Breast epithelium (tissue), 4 donors: ENCODE measurements at regions of chr2 and their contacts with region 1.

Region 1: DNA sequence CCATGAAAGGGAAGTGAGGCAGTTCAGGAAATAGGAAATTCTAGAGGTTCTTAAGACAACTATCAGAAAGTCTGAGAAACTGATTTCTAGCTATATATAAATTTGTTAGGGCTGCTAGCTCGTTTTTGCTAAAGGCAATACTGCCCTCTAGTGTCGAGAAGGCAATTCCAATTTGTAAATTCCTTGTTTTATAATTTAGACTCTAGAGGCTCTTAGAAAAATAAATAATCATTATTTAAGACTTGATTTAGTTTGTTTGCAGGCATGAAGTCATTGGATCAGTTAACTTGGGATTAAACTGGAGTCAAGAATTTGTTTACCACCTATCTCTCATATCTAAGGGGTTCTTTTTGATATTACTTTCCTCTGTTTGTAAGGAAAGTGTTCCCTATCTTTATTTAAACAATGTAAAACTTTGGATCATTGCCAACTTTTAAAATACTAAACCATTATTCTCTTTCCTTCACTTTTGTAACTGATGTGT is 66.2 kb downstream of the ACVR2A start:
- DNase-seq: no peak
- H3K4me3 ChIP-seq: no peak overlapping the region
- H3K27ac ChIP-seq: peak overlapping the region in 1 of 2 donors; percentile 16
- H3K4me1 ChIP-seq: no peaks in the 10 kb centered on the region
- H3K27me3 ChIP-seq: no peaks in the 10 kb centered on the region
- CTCF ChIP-seq: peak; percentile 62 to 78 (median 66)
- POLR2A ChIP-seq: no peak

Region 2: GRCh38 chr2:146927080-146927711 is 983.8 kb before region 1 on chr2:
- intact Hi-C with region 1: loop called (anchors 2 kb)
- DNase-seq: peak in 1 of 2 donors; percentile 48
- H3K4me3 ChIP-seq: no peak overlapping the region
- H3K27ac ChIP-seq: no peak overlapping the region
- H3K4me1 ChIP-seq: no peaks in the 10 kb centered on the region
- H3K27me3 ChIP-seq: no peaks in the 10 kb centered on the region
- CTCF ChIP-seq: peak in 2 of 3 donors; percentile 39 to 46
- POLR2A ChIP-seq: no peak

Region 3: DNA sequence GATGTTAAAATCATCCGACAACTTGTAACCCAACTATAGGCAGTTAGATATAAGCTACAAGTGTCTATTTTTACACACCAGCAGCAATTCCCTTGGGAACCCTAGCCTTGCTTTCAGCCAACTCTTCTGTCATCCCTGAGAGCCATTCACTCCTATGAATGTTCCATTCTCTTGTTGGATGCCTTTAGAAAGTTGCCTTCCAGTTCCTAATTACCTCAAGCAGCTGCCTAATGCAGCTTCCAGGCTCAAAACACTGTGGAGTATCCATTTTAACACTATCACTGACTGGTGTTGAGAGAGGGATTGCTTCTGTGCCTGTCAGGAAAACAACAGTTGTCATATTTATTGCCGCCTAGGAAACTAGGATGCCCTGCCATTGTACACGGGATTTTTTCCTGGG is 468.2 kb before region 1 on chr2:
- intact Hi-C with region 1: no loop called
- DNase-seq: no peak
- H3K4me3 ChIP-seq: no peak overlapping the region
- H3K27ac ChIP-seq: no peak overlapping the region
- H3K4me1 ChIP-seq: no peaks in the 10 kb centered on the region
- H3K27me3 ChIP-seq: no peaks in the 10 kb centered on the region
- CTCF ChIP-seq: no peak
- POLR2A ChIP-seq: no peak